ENCODE measurements at regions of chr1 and their contacts with region 1.

Region 1: GRCh38 chr1:182939413-182939812 is 13.6 kb downstream of the SHCBP1L start:
- DNase-seq: no peak
- H3K27ac ChIP-seq: no peak overlapping the region
- CTCF ChIP-seq: no peak

Region 2: DNA sequence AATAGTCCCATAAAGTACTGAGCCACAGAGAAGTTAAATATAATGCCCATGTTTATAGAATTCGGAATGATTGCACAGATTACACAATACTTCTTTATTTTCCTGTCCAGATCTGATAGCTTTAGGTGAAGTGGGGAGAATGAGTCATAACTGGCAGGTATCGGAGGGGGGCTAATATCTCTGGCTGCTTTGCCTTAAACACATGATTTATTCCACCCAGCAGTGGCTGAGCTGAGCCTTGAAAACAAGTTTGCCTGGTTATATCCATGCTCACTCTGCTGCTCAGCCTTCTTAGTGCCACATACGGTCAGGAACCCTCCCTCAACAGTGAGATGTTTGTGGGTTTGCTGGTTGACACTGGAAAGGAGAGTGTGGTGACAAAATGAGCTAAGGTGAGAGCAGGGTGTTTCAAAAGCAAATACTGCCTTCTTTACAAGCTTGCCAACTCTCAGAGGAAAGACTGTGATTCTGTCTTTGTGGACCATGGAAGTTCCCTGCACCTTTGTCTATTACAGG is 758.2 kb before region 1 on chr1:
- CTCF ChIA-PET with region 1: no interaction called
- POLR2A ChIA-PET with region 1: interaction called, 10 read pairs
- DNase-seq: peak; percentile 83
- H3K27ac ChIP-seq: peak overlapping the region; percentile 55; the same call in 1 of the 2 replicates
- CTCF ChIP-seq: no peak

Region 3: DNA sequence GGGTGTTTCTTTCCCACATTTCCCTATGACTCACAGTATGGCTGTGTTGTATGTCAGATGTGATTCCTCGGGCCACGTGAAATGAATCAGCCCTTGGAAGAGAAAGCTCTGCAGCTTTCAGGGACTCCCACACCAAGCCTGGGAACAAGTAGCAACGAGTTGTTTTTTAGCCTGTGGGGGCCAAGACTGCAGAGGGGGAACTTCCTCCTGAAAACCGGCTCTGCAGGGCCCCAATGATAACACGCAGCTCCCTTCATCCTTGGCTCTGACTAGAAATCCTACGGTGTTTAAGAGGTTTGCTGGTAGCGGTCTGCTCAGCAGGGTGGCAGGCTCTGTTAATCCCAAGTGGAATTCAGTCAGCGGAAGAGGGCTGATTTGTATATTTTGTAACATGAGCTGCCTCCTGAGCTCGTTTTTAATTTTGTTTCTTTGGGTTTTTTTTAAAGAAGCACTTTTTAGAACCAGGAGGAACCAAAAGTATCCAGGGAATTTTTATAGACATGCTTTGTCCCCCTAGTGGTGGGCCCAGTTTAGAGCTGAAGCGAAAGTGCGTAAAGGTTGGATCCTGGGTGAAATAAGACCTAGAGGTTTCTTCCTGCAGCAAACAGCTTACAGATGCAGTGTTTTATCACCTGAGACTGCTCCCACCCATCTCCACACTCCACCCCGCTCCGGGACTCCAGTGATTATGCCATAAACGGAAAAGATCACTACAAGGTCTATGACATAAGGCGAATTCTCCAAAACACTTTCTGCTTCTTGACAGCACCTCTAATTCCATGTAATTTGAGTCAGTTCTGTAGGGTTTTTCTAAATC is 295.5 kb after region 1 on chr1:
- CTCF ChIA-PET with region 1: no interaction called
- POLR2A ChIA-PET with region 1: no interaction called
- DNase-seq: peak; percentile 97
- H3K27ac ChIP-seq: peak overlapping the region; percentile 92
- CTCF ChIP-seq: peak; percentile 70

Measured in RWPE1 (cell line).